Endothelial cell of umbilical vein (primary cell): ENCODE measurements at regions of chr17 and their contacts with region 1.

Region 1: GRCh38 chr17:48724251-48725003 is 1.4 kb downstream of the PRAC2 start:
- DNase-seq: peak; percentile 69
- H3K4me3 ChIP-seq: no peak overlapping the region
- H3K27ac ChIP-seq: no peak overlapping the region
- H3K4me1 ChIP-seq: peaks cover 5% of the 10 kb centered on the region
- H3K27me3 ChIP-seq: peaks cover 93 to 98% of the 10 kb centered on the region in 2 experiments
- CTCF ChIP-seq: peak; percentile 74 to 81
- POLR2A ChIP-seq: no peak

Region 2: GRCh38 chr17:48678141-48678971 is 46.1 kb before region 1 on chr17:
- CTCF ChIA-PET with region 1: interaction called, 47 read pairs
- POLR2A ChIA-PET with region 1: no interaction called
- dilution Hi-C with region 1: no loop called
- intact Hi-C with region 1: loop called (anchors 2 kb)
- DNase-seq: peak; percentile 53
- H3K4me3 ChIP-seq: no peak overlapping the region
- H3K27ac ChIP-seq: no peak overlapping the region
- H3K4me1 ChIP-seq: no peaks in the 10 kb centered on the region
- H3K27me3 ChIP-seq: peaks cover 13 to 19% of the 10 kb centered on the region in 2 experiments
- CTCF ChIP-seq: peak; percentile 95 to 100
- POLR2A ChIP-seq: no peak

Region 3: GRCh38 chr17:48738803-48739526 is 14.5 kb after region 1 on chr17:
- CTCF ChIA-PET with region 1: interaction called, 41 read pairs
- POLR2A ChIA-PET with region 1: no interaction called
- dilution Hi-C with region 1: no loop called
- intact Hi-C with region 1: no loop called
- DNase-seq: no peak
- H3K4me3 ChIP-seq: no peak overlapping the region
- H3K27ac ChIP-seq: no peak overlapping the region
- H3K4me1 ChIP-seq: no peaks in the 10 kb centered on the region
- H3K27me3 ChIP-seq: peaks cover 82 to 96% of the 10 kb centered on the region in 2 experiments
- CTCF ChIP-seq: no peak
- POLR2A ChIP-seq: no peak

Region 4: DNA sequence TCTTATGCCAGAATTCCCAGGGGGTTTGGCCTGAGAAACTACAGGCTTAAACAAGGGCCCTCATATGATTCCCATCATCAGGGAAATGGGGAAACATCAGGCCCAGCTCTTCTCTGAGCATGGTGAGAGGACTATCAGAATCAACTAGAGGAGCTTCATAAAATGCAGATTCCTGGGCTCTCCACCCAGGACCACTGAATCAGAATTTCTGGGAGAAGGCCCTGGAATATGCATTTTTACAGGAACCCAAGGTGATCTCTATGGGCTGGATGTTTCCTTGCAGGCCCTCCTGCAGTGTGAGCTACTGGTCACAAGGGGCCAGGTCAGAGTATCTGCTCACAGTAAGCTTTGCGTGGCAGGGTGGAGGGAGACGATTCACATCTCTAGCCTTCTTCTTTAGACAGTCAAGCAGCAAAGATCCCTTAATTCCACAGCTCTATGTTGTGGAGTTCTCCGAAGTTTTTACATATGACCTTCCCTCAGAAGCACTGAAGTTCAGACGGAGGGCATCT is 42.9 kb after region 1 on chr17:
- CTCF ChIA-PET with region 1: interaction called, 19 read pairs
- POLR2A ChIA-PET with region 1: no interaction called
- dilution Hi-C with region 1: no loop called
- intact Hi-C with region 1: no loop called
- DNase-seq: no peak
- H3K4me3 ChIP-seq: no peak overlapping the region
- H3K27ac ChIP-seq: no peak overlapping the region
- H3K4me1 ChIP-seq: no peaks in the 10 kb centered on the region
- H3K27me3 ChIP-seq: peaks cover 20 to 33% of the 10 kb centered on the region in 2 experiments
- CTCF ChIP-seq: no peak
- POLR2A ChIP-seq: no peak

Region 5: DNA sequence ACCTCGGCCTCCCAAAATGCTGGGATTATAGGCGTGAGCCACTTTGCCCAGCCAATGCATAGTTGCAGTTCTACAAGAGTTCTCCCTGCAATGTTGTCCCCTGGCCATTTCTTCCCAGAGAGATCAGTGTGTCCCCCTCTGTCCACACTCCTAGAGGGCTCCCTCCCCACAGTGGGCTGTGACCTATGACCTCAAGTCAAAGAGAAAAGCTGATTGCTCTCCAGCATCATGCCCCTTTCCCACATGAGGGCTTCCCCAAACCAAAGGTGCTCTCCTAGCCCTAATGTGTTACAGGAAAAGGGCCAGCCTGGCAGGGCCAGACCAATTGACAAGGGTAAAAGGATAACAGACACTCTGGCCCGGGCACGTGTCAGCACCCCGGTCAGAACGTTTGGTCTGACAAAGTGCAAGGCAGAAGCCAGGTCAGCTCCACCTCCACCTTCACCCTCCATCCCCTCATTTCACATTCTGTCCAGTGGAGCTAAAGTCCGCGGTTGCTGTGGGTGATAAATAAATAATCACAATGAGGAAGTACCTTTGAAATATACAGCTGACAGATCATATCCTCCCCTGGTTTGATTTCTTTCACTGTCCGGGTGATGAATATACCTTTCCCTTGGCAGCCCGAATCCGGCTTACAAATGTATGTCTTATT is 74.8 kb after region 1 on chr17:
- CTCF ChIA-PET with region 1: interaction called, 312 read pairs
- POLR2A ChIA-PET with region 1: no interaction called
- dilution Hi-C with region 1: no loop called
- intact Hi-C with region 1: no loop called
- DNase-seq: no peak
- H3K4me3 ChIP-seq: no peak overlapping the region
- H3K27ac ChIP-seq: no peak overlapping the region
- H3K4me1 ChIP-seq: no peaks in the 10 kb centered on the region
- H3K27me3 ChIP-seq: peaks cover 2 to 5% of the 10 kb centered on the region in 2 experiments
- CTCF ChIP-seq: no peak
- POLR2A ChIP-seq: no peak

Region 6: DNA sequence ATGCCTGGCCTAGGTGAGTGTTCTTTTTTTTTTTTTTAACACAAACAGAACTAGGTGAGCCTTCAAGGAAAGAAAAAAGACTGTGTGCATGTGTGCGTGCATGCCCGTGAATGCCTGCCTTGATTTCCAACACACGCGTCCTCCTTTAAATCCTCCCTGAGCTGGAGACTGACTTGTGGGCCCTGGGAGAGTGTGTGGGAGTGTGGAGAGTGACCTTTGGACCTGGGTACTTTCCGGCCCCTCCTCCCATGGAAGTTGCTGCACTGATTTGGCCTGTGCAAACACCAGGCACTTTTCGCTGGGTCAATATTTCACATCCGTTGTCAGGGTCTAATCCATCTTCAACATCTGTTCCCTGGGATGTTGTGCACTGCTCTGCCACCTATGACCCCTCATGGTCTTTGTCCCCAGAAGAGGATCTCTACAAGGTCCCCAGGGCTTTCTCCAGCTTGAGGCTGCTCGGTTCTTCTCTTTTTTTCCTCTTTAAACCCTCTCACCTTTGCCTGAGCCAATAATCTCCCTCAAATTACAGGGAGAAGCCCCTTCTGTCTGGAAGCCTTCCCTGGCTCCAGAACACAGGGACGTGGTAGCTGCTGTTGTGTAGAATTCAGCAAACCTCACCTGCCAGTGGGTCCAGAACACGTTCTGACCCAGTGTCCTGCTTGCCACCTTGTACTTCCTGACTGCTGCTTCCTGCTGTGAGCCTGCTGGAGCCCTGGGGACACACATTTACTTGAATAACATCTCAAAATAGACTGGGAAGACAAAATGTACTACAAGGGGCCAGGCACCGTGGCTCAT is 147.3 kb after region 1 on chr17:
- CTCF ChIA-PET with region 1: interaction called, 171 read pairs
- POLR2A ChIA-PET with region 1: no interaction called
- dilution Hi-C with region 1: no loop called
- intact Hi-C with region 1: no loop called
- DNase-seq: peak; percentile 60
- H3K4me3 ChIP-seq: no peak overlapping the region
- H3K27ac ChIP-seq: no peak overlapping the region
- H3K4me1 ChIP-seq: peaks cover 18% of the 10 kb centered on the region
- H3K27me3 ChIP-seq: no peaks in the 10 kb centered on the region
- CTCF ChIP-seq: no peak
- POLR2A ChIP-seq: no peak